AG04449 (cell line): ENCODE measurements at regions of chr9 and their contacts with region 1.

Region 1: DNA sequence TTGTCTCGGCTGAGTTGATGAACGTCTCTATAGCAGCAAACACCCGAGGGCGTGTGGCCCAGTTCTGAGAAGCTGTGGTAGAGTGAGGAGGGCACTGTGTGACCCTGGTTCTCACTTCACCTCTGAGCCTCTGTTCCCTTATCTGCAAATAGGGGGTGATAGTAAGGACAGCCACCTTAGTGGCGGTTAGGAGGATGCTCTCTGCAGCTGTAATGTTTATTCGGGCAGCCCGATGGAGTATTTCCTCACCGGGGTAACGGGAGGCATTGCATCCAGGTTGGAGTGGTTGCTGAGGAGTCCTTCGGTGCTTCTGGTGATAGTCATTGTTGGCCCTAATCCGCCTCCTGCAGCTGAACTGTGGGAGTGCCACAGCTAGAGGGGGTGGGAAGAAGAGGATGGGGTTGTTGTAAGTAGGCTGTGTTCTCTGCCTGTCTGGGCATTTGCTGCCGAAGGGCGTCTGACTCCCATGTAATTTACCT is 13.9 kb downstream of the PRRC2B start:
- DNase-seq: no peak
- H3K4me3 ChIP-seq: no peak overlapping the region
- CTCF ChIP-seq: peak; percentile 27

Region 2: GRCh38 chr9:131138676-131139075 is 269.1 kb before region 1 on chr9:
- CTCF ChIA-PET with region 1: no interaction called
- POLR2A ChIA-PET with region 1: no interaction called
- DNase-seq: no peak
- H3K4me3 ChIP-seq: no peak overlapping the region
- CTCF ChIP-seq: no peak

Region 3: DNA sequence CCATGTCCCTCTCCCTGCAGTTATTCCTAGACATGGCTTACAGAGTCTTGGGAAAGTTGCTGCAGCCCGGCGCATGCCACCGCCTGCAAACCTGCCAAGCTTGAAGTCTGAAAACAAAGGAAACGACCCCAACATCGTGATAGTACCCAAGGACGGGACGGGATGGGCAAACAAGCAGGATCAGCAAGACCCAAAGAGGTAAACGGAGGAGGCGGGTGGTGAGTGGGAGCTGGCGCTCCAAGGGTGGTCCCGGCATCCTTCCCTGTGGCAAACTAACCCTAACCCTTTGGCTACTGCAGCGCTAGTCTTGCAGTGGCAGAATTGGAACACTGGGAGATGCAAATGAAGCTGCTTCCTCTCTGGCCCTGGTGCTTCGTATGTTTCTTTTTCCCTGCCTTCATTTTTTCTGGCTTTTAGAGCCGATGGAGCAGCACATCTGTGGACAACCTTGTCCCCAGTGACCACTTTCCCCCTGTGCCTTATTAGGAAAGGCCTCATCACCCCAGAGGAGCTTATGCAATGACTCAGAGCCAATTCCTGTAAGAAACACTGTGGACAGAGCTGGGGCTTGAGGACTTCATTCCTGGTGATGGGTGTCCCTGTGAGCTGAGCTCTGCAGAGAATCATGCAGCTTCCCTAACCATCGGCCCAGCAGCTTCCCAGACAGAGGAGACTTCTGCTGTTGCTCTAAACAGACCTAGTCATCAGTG is 25.0 kb after region 1 on chr9:
- CTCF ChIA-PET with region 1: interaction called, 11 read pairs
- POLR2A ChIA-PET with region 1: interaction called, 4 read pairs
- DNase-seq: peak; percentile 89
- H3K4me3 ChIP-seq: no peak overlapping the region
- CTCF ChIP-seq: no peak

Region 4: DNA sequence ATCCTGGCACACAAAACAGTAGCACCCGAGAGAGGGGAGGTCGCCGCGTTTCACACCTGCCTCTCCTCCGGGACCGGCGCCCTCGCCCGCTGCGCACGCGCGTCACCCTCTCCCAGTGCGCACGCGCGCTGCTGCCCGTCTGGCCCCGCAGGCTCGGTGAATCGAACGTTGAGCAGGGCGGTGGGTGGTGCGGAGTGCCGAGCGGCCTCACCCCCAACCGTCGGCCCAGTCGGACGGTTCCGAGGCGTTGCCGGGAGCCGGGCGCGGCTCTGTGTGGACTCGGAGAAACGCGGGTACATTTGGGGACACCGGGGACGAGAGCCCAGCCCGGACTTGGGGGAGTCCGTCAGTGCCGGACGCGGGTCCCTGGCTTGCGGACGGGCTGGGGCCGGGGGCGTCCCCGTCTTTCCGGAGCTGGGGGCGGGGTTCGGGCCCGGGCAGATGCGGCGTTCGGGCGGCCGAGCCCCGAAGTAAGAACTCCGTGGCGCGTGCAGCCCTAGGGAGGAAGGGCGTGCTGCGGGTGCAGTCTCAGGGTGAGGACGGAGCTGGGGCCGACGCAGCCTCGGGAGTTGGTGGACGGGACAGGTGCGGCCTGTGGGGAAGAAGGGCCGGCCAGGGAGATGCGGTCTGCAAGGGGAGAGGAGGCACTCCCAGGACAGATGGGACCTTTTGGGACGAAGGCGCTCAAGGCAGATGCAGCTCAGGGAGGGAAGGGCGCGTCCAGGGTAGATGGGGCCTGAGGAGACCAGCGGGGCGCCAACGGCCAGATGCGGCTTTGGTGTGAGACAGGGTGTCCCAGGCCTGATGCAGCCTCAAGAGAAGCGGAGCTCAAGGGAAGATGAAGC is 95.2 kb after region 1 on chr9 and contains the start of gene POMT1:
- CTCF ChIA-PET with region 1: no interaction called
- POLR2A ChIA-PET with region 1: no interaction called
- DNase-seq: no peak
- H3K4me3 ChIP-seq: peak within 1 kb of the TSS; percentile 87
- CTCF ChIP-seq: no peak

Region 5: GRCh38 chr9:131868766-131869165 is 461.0 kb after region 1 on chr9:
- CTCF ChIA-PET with region 1: no interaction called
- POLR2A ChIA-PET with region 1: no interaction called
- DNase-seq: no peak
- H3K4me3 ChIP-seq: no peak overlapping the region
- CTCF ChIP-seq: no peak